Panc1 (cell line): ENCODE measurements at regions of chr19 and their contacts with region 1.

Region 1: DNA sequence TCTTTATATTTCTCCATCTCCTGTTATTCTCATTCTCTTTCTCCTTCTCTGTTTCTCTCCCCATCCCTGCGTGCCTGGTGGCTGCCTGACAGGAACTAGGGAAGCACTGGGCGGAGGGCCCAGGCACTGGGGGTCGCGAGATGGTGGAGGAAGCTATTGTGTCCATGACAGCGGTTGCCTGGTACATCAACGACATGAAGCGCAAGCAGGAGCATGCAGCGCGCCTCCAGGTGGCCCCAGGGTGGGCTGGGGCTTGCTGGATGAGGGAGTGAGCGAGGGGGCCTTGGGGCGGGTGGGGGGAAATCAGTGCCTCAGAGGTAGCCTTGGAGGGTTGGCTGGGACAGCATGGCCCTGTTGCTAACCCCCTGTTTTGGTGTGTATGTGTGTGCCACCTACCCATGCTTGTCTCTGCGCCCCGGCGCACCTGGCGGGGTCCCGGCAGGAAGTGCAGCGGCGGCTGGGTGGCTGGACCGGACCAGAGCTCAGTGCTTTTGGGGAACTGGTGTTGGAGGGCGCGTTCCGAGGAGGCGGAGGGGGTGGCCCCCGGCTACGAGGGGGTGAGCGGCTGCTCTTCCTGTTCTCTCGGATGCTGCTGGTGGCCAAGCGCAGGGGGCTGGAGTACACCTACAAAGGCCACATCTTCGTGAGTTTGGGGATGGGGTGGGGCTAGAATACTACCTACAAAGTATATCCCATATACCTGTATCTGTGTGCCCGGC is 5.2 kb downstream of the PLEKHG2 start:
- DNase-seq: no peak
- ATAC-seq: no peak
- H3K4me3 ChIP-seq: no peak overlapping the region
- H3K27ac ChIP-seq: no peak overlapping the region
- H3K4me1 ChIP-seq: peaks cover 26% of the 10 kb centered on the region
- H3K27me3 ChIP-seq: no peaks in the 10 kb centered on the region
- CTCF ChIP-seq: no peak

Region 2: GRCh38 chr19:39428283-39429112 is 10.9 kb after region 1 on chr19:
- CTCF ChIA-PET with region 1: interaction called, 147 read pairs
- POLR2A ChIA-PET with region 1: interaction called, 230 read pairs
- in situ Hi-C with region 1: no loop called
- intact Hi-C with region 1: loop called (anchors 1 kb)
- DNase-seq: peak; percentile 92
- ATAC-seq: peak; percentile 70
- H3K4me3 ChIP-seq: peak overlapping the region; percentile 0 to 17; a peak in 3 of 4 replicates
- H3K27ac ChIP-seq: peak overlapping the region; percentile 86
- H3K4me1 ChIP-seq: peaks cover 75% of the 10 kb centered on the region
- H3K27me3 ChIP-seq: no peaks in the 10 kb centered on the region
- CTCF ChIP-seq: no peak